Panc1 (cell line): ENCODE measurements at regions of chr2 and their contacts with region 1.

Region 1: GRCh38 chr2:65064728-65065552 is 8.7 kb downstream of the CEP68 start:
- DNase-seq: no peak
- ATAC-seq: peak; percentile 59
- H3K4me3 ChIP-seq: no peak overlapping the region
- H3K27ac ChIP-seq: no peak overlapping the region; the same call in 1 of the 2 replicates
- H3K4me1 ChIP-seq: peaks cover 9% of the 10 kb centered on the region
- H3K27me3 ChIP-seq: no peaks in the 10 kb centered on the region
- CTCF ChIP-seq: peak; percentile 79

Region 2: DNA sequence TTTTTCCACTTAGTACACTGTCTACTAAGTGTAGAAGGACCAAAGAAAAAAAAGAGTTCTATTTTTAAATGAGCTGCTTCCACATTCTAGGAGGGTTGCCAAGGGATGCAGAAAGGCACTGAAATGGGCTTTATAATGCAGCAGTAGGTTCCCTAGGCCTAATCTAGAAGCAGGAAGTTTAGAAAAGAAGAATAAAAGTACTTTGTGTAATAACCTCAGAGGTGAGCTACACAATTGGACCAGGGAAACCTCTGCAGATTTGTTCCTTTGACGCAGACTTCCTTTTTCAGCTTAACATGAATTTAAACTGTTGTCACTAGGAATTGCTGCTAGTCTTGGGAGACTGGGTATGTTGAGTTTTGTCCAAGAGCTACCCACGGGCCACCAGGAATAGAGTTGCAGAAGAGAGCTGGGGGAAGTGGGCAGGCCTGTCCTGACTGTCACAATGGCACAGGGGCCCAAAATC is 99.5 kb after region 1 on chr2:
- CTCF ChIA-PET with region 1: interaction called, 3 read pairs
- POLR2A ChIA-PET with region 1: interaction called, 6 read pairs
- in situ Hi-C with region 1: no loop called
- intact Hi-C with region 1: loop called (anchors 5 kb)
- DNase-seq: no peak
- ATAC-seq: no peak
- H3K4me3 ChIP-seq: no peak overlapping the region
- H3K27ac ChIP-seq: no peak overlapping the region
- H3K4me1 ChIP-seq: no peaks in the 10 kb centered on the region
- H3K27me3 ChIP-seq: no peaks in the 10 kb centered on the region
- CTCF ChIP-seq: no peak